MCF 10A (cell line): ENCODE measurements at regions of chr2 and their contacts with region 1.

Region 1: DNA sequence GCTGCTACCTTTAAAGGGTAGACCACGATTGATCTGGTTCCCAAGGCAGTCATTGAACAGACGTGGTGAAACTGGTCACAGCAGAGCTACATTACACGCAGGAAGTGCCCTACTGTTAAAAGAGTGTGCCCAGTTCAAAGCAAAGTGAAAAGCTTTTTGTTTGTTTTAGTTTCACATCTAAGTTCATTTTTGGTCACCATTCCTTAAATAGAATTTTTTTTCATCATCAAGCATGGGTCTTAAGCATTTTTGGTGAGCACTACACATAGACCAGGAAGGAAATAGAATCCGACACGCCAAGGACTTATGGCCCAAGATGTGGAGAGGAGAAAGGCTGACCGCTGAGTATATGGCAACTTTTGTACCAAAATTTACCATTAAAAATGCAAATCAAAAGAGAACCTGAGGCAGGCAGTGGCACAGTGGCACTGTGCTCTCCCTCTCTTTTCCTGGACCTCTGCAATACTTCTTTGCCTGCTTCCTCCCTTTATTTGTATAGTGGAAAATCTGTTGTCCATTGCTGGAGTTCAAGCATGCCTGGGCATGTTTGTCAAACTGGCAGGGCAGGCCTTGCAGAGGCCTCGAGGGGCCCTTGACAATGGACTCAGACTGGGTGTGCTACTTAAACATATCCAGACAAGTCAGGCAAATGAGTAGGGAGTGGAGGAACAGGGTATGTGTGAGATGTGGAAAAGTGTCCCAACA is 42.6 kb upstream of the HNRNPA3 start:
- DNase-seq: peak; percentile 95
- H3K4me3 Mint-ChIP-seq: peak overlapping the region; percentile 3
- H3K27ac Mint-ChIP-seq: peak overlapping the region; percentile 91
- H3K4me1 Mint-ChIP-seq: peaks cover 28% of the 10 kb centered on the region
- H3K27me3 Mint-ChIP-seq: no peaks in the 10 kb centered on the region
- CTCF ChIP-seq: no peak

Region 2: GRCh38 chr2:177187631-177188312 is 17.8 kb after region 1 on chr2:
- CTCF ChIA-PET with region 1: interaction called, 10 read pairs
- POLR2A ChIA-PET with region 1: interaction called, 11 read pairs
- intact Hi-C with region 1: no loop called
- DNase-seq: peak; percentile 32
- H3K4me3 Mint-ChIP-seq: no peak overlapping the region
- H3K27ac Mint-ChIP-seq: peak overlapping the region; percentile 5
- H3K4me1 Mint-ChIP-seq: peaks cover 30% of the 10 kb centered on the region
- H3K27me3 Mint-ChIP-seq: no peaks in the 10 kb centered on the region
- CTCF ChIP-seq: no peak

Region 3: DNA sequence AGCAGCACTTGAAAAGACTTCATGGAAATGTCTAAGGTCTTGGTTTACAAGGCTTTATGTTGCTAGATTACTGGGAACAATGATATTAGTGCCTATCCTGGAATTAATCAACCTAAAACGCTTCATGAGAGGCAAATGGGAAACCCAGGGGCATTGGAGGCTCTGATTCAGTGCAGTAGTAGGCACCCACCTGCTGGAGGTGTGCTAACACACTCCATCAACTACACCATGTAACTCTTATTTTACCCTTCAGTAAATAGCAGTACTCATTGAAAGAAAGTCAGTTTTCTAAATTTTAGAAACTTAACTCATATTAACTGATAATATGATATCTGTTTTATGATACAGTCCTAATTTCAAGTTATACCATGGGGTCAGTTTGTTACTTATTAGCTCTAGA is 25.2 kb after region 1 on chr2:
- CTCF ChIA-PET with region 1: interaction called, 10 read pairs
- POLR2A ChIA-PET with region 1: interaction called, 11 read pairs
- intact Hi-C with region 1: no loop called
- DNase-seq: no peak
- H3K4me3 Mint-ChIP-seq: no peak overlapping the region
- H3K27ac Mint-ChIP-seq: no peak overlapping the region
- H3K4me1 Mint-ChIP-seq: peaks cover 6% of the 10 kb centered on the region
- H3K27me3 Mint-ChIP-seq: no peaks in the 10 kb centered on the region
- CTCF ChIP-seq: no peak

Region 4: GRCh38 chr2:177229448-177230242 is 59.7 kb after region 1 on chr2:
- CTCF ChIA-PET with region 1: interaction called, 11 read pairs
- POLR2A ChIA-PET with region 1: interaction called, 102 read pairs
- intact Hi-C with region 1: no loop called
- DNase-seq: no peak
- H3K4me3 Mint-ChIP-seq: no peak overlapping the region
- H3K27ac Mint-ChIP-seq: peak overlapping the region; percentile 35
- H3K4me1 Mint-ChIP-seq: peaks cover 21% of the 10 kb centered on the region
- H3K27me3 Mint-ChIP-seq: no peaks in the 10 kb centered on the region
- CTCF ChIP-seq: no peak

Region 5: DNA sequence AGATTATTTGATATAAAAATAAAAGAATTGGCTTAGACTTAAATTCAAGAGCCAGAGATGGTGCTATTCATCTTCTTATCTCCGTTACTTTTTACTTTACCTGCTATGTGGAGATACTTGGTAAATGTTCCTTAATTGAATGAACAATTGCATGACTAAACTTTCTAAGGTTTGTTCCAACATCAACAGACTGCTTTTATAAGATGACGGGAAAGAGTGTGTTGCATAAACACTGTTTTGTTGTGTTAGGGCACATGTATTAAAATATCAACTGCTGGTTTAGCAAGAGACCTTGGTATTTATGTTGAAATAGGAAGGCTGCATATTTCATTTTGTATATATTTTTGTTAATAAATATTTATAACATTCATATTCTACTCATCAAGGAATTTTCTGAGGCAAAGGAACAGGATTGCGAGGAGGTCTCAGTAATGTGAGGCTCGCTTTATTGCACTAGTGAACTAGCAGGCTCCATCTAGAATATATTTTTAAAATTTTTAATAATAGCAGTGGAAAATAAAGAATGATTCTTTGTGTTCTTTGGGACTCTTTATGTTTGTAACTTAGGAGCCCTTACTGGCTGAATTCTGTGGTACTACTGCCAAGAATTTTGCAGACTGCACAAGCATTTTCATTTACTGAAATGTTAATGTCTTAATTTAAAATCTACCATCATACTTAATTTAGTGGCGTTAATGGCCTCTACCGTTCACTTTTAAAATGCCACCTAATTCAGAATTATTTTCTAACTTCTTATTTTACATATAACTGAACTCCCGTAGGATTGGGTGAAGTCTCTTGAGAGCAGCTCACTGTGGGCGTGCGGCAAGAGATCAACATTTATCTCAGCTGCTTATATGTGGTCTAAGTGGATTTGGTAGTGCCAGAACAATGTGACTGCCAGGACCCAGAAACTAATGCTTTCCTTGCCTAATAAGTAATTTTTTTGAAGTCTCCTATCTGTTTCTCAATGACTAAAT is 105.4 kb after region 1 on chr2:
- CTCF ChIA-PET with region 1: interaction called, 5 read pairs
- POLR2A ChIA-PET with region 1: interaction called, 29 read pairs
- intact Hi-C with region 1: no loop called
- DNase-seq: peak; percentile 93
- H3K4me3 Mint-ChIP-seq: peak overlapping the region; percentile 62
- H3K27ac Mint-ChIP-seq: peak overlapping the region; percentile 91
- H3K4me1 Mint-ChIP-seq: peaks cover 20% of the 10 kb centered on the region
- H3K27me3 Mint-ChIP-seq: no peaks in the 10 kb centered on the region
- CTCF ChIP-seq: no peak